PC-3 (cell line): ENCODE measurements at regions of chr1 and their contacts with region 1.

Region 1: DNA sequence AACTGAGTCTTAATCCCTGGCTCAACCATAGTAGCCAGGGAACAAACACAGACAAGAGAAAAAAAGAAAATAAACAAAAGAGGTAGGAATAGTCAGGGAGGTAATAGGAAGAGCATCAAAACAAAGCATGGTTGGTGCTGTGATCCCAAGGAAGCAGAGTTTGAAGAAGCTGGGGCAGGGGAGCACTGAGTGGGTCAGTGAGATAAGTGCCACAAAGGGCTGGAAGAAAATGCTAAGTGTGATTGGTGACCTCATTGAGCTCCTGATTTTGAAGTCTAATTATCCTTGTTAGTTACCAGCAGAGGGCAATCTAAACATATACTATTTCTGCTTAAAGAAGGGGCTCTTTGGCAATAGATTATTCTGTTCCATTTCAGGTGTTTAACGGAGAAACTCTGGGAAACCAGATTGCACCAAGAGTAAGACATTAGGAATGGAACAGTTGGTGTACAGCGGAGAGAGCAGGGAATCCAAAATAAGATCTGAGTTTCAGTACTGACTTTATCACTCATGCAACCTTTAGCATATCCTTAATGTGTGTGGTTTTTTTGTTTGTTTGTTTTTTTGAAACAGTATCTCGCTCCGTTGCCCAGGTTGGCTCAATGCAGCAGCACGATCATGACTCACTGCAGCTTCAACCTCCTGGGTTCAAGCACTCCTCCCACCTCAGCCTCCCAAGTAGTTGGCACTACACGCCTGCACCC is 30.7 kb upstream of the KIAA1614 start:
- DNase-seq: peak; percentile 51
- ATAC-seq: peak; percentile 67
- H3K4me3 ChIP-seq: no peak overlapping the region
- H3K27ac ChIP-seq: no peak overlapping the region
- H3K4me1 ChIP-seq: peaks cover 9% of the 10 kb centered on the region
- H3K27me3 ChIP-seq: no peaks in the 10 kb centered on the region
- CTCF ChIP-seq: peak; percentile 71

Region 2: DNA sequence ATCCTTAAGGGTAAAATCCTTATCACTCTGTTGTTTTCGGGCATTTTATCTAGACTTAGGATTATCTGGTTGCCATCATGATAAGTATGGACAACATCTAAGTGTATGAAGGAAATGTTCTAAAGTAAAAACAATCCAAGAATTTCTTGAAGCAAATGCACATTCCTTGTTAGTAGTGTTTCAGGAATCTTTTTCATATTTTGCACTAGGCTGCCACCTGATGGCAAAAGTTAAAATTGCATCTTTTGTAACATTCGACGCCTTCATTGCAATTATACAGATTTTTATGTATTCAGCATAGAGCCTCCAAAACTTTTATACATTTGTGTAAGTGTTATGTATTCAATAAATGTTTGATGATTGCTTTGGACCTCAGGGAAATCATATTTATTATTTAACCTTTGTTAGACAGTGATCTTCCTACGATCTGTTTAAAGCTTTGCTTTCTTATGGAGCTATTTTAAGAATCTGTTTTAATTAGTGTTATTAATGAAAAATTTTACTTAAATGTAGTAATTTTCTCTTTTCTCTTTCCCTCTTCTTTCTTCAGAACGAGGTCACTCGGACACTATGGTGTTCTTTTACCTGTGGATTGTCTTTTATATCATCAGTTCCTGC is 18.7 kb before region 1 on chr1:
- CTCF ChIA-PET with region 1: no interaction called
- POLR2A ChIA-PET with region 1: no interaction called
- intact Hi-C with region 1: no loop called
- DNase-seq: peak; percentile 71
- ATAC-seq: no peak
- H3K4me3 ChIP-seq: no peak overlapping the region
- H3K27ac ChIP-seq: no peak overlapping the region
- H3K4me1 ChIP-seq: no peaks in the 10 kb centered on the region
- H3K27me3 ChIP-seq: no peaks in the 10 kb centered on the region
- CTCF ChIP-seq: peak; percentile 69

Region 3: DNA sequence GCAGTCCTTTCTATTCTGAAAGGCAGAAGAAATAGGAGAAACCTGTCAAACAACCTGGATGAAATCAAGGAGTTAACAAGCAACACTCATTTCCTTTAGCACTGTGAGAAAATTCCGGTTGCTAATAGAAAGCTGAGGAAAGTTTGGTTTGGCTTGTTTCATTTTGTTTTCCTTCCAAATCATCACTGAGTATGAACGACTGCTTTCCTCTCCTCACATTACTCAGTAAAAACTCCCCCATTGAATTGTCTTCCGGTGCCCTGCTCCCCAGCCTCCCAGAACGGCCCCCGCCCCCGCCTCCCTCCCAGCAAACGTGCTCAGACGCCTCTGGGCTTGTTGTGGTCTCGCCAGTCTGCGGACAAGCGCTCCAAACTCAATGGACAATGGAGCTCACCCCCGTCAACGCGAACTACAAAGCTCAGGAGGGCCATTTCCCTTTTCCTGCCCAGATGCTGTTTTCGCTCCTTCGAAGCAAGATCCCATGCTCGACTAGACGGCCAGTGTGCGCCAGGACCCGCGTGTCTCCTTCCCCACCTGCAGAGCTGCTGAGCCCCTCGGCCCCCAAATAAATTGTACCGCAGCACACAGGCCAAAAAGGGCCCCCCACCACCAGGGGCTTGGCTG is 140.0 kb after region 1 on chr1:
- CTCF ChIA-PET with region 1: interaction called, 20 read pairs
- POLR2A ChIA-PET with region 1: no interaction called
- intact Hi-C with region 1: no loop called
- DNase-seq: peak; percentile 83
- ATAC-seq: peak; percentile 58
- H3K4me3 ChIP-seq: peak overlapping the region; percentile 87
- H3K27ac ChIP-seq: peak overlapping the region; percentile 96
- H3K4me1 ChIP-seq: peaks cover 15% of the 10 kb centered on the region
- H3K27me3 ChIP-seq: no peaks in the 10 kb centered on the region
- CTCF ChIP-seq: no peak

Region 4: GRCh38 chr1:181077576-181078242 is 195.8 kb after region 1 on chr1:
- CTCF ChIA-PET with region 1: interaction called, 3 read pairs
- POLR2A ChIA-PET with region 1: no interaction called
- intact Hi-C with region 1: loop called (anchors 5 kb)
- DNase-seq: peak; percentile 77
- ATAC-seq: peak; percentile 49
- H3K4me3 ChIP-seq: peak overlapping the region; percentile 41; the same call in 1 of the 2 replicates
- H3K27ac ChIP-seq: peak overlapping the region; percentile 65
- H3K4me1 ChIP-seq: peaks cover 47% of the 10 kb centered on the region
- H3K27me3 ChIP-seq: no peaks in the 10 kb centered on the region
- CTCF ChIP-seq: no peak

Region 5: GRCh38 chr1:181088079-181089016 is 206.4 kb after region 1 on chr1 and contains the start of gene IER5:
- CTCF ChIA-PET with region 1: interaction called, 16 read pairs
- POLR2A ChIA-PET with region 1: no interaction called
- intact Hi-C with region 1: no loop called
- DNase-seq: peak; percentile 95
- ATAC-seq: peak; percentile 72
- H3K4me3 ChIP-seq: peak within 1 kb of the TSS; percentile 99
- H3K27ac ChIP-seq: peak within 1 kb of the TSS; percentile 90
- H3K4me1 ChIP-seq: peaks cover 18% of the 10 kb centered on the region
- H3K27me3 ChIP-seq: no peaks in the 10 kb centered on the region
- CTCF ChIP-seq: no peak
- total RNA-seq, gene IER5: 100 and 126 TPM in 2 replicates

Region 6: GRCh38 chr1:181142096-181142958 is 260.4 kb after region 1 on chr1:
- CTCF ChIA-PET with region 1: interaction called, 7 read pairs
- POLR2A ChIA-PET with region 1: no interaction called
- intact Hi-C with region 1: loop called (anchors 1 kb)
- DNase-seq: peak; percentile 88
- ATAC-seq: peak; percentile 65
- H3K4me3 ChIP-seq: peak overlapping the region; percentile 51; the same call in 1 of the 2 replicates
- H3K27ac ChIP-seq: peak overlapping the region; percentile 99
- H3K4me1 ChIP-seq: peaks cover 38% of the 10 kb centered on the region
- H3K27me3 ChIP-seq: no peaks in the 10 kb centered on the region
- CTCF ChIP-seq: peak; percentile 92

Region 7: GRCh38 chr1:181166377-181167196 is 284.6 kb after region 1 on chr1:
- CTCF ChIA-PET with region 1: no interaction called
- POLR2A ChIA-PET with region 1: no interaction called
- intact Hi-C with region 1: loop called (anchors 1 kb)
- DNase-seq: peak; percentile 80
- ATAC-seq: peak; percentile 99
- H3K4me3 ChIP-seq: no peak overlapping the region
- H3K27ac ChIP-seq: no peak overlapping the region
- H3K4me1 ChIP-seq: no peaks in the 10 kb centered on the region
- H3K27me3 ChIP-seq: no peaks in the 10 kb centered on the region
- CTCF ChIP-seq: peak; percentile 76